ENCODE measurements at regions of chr5 and their contacts with region 1.

Region 1: DNA sequence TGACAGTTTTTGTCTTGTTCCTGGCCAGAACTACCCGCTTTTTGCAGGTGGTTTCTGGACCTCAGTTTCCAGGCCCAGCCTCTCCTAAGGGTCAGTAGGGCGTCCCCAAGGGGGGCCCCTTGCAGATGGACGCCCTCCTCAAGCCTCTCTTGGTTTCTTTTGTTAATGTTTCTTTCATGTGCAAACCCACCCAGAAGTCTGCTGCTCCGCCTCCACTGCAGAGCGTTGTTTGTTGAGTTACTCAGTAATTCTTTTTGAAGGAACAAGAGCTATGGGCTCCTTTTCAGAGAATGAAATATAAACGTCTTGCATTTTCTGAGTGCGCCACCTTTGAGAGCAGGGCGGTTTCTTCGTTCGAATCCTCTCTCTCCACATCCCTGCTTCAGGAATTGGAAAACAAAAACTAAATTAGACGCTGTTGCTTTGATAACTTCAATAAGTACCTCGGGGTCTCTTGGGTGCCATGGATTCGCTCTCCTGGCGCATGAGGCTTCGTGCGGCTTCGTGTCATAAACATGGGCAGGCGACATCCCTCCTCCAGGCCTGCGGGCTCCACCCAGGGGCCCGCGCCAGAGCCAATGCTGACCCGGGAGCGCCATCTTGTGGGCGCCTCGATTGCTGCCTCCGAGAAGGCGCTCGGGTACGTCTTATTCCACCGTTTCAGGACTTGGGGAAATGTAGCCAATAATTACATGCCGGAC is 38.3 kb upstream of the CKMT2 start:
- DNase-seq: peak; percentile 88
- H3K4me3 Mint-ChIP-seq: peak overlapping the region; percentile 51
- H3K27ac Mint-ChIP-seq: no peak overlapping the region
- H3K4me1 Mint-ChIP-seq: peaks cover 8% of the 10 kb centered on the region
- H3K27me3 Mint-ChIP-seq: no peaks in the 10 kb centered on the region

Region 2: DNA sequence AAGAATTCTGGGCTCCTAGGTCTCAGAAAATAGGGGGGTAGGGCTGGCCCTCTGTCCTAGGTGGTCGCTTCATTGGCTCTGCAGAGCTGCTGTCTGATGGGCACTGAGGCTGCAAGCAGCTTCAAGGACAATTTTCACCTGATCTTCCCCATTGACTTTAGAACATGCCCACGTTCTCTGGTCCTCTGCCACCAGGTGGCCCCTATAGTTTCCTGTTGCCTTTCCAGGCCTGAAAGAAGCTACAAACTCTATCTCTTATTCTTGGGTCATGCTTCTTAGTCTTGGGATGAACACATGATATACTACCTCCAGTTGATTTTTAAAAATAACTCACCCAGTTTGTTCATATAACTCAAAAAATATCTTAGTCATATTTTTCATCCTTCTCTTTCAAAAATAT is 848.7 kb before region 1 on chr5:
- CTCF ChIA-PET with region 1: interaction called, 3 read pairs
- intact Hi-C with region 1: loop called (anchors 1 kb)
- DNase-seq: peak; percentile 63
- H3K4me3 Mint-ChIP-seq: no peak overlapping the region
- H3K27ac Mint-ChIP-seq: no peak overlapping the region
- H3K4me1 Mint-ChIP-seq: no peaks in the 10 kb centered on the region
- H3K27me3 Mint-ChIP-seq: peaks cover 4% of the 10 kb centered on the region

Region 3: GRCh38 chr5:80481019-80481893 is 713.5 kb before region 1 on chr5:
- CTCF ChIA-PET with region 1: interaction called, 3 read pairs
- intact Hi-C with region 1: loop called (anchors 2 kb)
- DNase-seq: peak; percentile 60
- H3K4me3 Mint-ChIP-seq: no peak overlapping the region
- H3K27ac Mint-ChIP-seq: no peak overlapping the region
- H3K4me1 Mint-ChIP-seq: no peaks in the 10 kb centered on the region
- H3K27me3 Mint-ChIP-seq: no peaks in the 10 kb centered on the region

Region 4: GRCh38 chr5:80686757-80687156 is 508.0 kb before region 1 on chr5:
- CTCF ChIA-PET with region 1: no interaction called
- intact Hi-C with region 1: loop called (anchors 2 kb)
- DNase-seq: no peak
- H3K4me3 Mint-ChIP-seq: no peak overlapping the region
- H3K27ac Mint-ChIP-seq: no peak overlapping the region
- H3K4me1 Mint-ChIP-seq: peaks cover 11% of the 10 kb centered on the region
- H3K27me3 Mint-ChIP-seq: no peaks in the 10 kb centered on the region

Region 5: GRCh38 chr5:80711938-80712337 is 482.8 kb before region 1 on chr5:
- CTCF ChIA-PET with region 1: no interaction called
- intact Hi-C with region 1: loop called (anchors 2 kb)
- DNase-seq: peak; percentile 33
- H3K4me3 Mint-ChIP-seq: no peak overlapping the region
- H3K27ac Mint-ChIP-seq: no peak overlapping the region
- H3K4me1 Mint-ChIP-seq: peaks cover 6% of the 10 kb centered on the region
- H3K27me3 Mint-ChIP-seq: no peaks in the 10 kb centered on the region

Region 6: DNA sequence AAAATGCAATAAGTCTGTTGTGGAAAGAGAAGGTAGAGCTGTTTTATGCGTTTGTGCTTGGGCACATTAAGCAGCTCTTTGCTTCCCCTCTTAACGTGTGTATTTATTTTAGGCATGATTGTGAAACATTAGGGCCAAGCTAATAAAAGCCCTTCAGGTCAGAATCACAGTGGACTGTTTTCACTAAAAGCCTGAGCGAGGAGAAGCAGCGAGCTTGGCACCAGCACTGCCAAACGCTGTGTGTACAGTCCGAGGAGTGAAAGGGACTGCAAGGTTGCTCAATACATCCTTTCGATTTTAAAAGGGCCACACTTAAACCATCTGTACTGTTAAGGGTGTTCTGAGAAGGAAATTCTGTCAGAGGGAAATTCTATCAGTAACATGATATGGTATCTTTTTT is 68.8 kb before region 1 on chr5:
- CTCF ChIA-PET with region 1: no interaction called
- intact Hi-C with region 1: no loop called
- DNase-seq: no peak
- H3K4me3 Mint-ChIP-seq: no peak overlapping the region
- H3K27ac Mint-ChIP-seq: no peak overlapping the region
- H3K4me1 Mint-ChIP-seq: peaks cover 10% of the 10 kb centered on the region
- H3K27me3 Mint-ChIP-seq: no peaks in the 10 kb centered on the region

Region 7: DNA sequence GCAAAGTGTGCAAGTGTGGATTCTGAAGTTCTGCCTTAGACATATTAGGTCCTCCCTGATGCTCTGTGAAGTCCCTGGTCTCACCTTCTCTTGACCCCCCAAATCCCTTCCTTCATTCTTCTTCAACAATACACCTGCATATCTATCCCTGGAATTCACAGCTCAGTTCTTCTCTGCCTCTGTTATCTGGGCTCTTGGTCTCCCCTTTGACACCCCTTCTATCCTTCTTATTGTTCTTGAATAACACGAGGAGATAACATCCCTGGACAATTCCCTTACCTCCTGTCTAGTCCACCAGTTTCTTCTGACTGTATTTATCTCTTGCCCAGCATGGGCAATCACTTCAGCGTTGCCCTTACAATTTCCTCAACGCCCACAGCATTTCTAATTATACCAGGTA is 672.2 kb after region 1 on chr5:
- CTCF ChIA-PET with region 1: no interaction called
- intact Hi-C with region 1: no loop called
- DNase-seq: no peak
- H3K4me3 Mint-ChIP-seq: no peak overlapping the region
- H3K27ac Mint-ChIP-seq: no peak overlapping the region
- H3K4me1 Mint-ChIP-seq: no peaks in the 10 kb centered on the region
- H3K27me3 Mint-ChIP-seq: no peaks in the 10 kb centered on the region